ENCODE measurements at regions of chr20 and their contacts with region 1.

Region 1: DNA sequence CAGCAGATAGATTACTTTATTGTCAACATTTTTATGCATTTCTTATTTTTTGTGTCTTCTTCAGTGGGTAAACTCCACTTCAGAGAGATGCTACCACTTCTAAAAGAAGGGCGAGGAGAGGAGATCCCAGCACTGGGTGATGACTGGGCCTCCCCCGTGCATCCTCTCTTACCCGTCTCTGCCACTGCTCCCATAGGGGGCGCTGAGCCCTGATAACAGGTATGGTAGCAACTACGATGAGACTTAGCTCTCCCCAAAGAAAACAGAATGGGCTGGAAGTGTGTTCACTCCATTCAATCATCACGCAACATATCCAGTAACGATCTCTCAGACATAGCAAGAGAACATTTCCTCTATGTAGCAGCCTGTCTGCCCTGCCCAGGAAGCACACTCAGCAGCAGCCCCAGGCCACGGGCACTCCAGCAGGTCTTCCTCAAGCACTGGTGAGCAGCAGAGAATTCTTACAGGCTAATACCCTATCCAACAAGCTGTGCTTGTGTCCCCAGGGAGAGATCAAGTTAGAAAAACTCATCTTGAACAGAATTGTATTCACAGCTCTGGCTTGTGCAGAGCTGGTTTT is 533.2 kb upstream of the CDH4 start:
- DNase-seq: peak; percentile 23
- H3K4me3 ChIP-seq: no peak overlapping the region
- H3K27ac ChIP-seq: no peak overlapping the region
- H3K4me1 ChIP-seq: no peaks in the 10 kb centered on the region
- H3K27me3 ChIP-seq: peaks cover 13% of the 10 kb centered on the region
- CTCF ChIP-seq: peak; percentile 51

Region 2: DNA sequence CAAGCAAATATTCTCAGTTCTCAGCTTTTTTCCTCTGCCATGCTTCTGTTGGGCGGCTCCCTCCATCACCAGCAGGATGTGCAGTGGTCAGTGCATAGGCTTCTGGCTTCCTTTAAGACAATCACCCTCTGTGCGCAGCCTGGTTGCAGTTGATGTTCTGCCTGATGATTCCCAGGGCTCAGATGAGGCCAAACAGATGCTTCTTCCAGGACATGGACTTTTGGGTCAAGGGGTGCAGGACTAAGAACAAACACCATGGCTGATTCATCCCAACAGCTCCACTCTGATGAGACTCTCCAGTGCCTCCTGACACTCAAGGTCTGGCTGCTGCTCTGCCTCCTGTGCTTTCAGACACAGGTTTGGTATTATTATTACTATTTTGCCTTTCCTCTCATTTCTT is 21.6 kb before region 1 on chr20:
- CTCF ChIA-PET with region 1: no interaction called
- POLR2A ChIA-PET with region 1: no interaction called
- intact Hi-C with region 1: no loop called
- DNase-seq: no peak
- H3K4me3 ChIP-seq: no peak overlapping the region
- H3K27ac ChIP-seq: no peak overlapping the region
- H3K4me1 ChIP-seq: no peaks in the 10 kb centered on the region
- H3K27me3 ChIP-seq: no peaks in the 10 kb centered on the region
- CTCF ChIP-seq: no peak

Region 3: DNA sequence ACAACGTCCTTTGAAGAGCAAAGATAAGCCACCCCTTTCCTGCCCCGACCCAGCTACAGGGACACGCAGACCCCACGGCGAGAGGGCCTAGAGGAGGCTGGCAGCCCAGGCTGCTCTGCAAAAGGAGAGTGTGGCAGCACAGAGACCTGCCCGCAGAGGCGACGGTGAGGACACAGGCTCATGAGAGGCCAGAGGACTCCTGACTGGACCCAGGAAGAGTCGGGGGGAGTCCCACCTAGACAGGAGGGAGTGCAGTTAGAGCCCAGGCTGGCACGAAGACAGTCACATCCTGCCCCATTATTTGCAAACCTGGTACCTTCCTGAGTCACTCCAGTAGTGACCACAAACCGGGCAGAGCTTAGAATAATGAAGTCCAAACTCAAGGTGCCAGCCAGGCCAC is 305.6 kb after region 1 on chr20:
- CTCF ChIA-PET with region 1: interaction called, 13 read pairs
- POLR2A ChIA-PET with region 1: no interaction called
- intact Hi-C with region 1: no loop called
- DNase-seq: no peak
- H3K4me3 ChIP-seq: no peak overlapping the region
- H3K27ac ChIP-seq: no peak overlapping the region
- H3K4me1 ChIP-seq: no peaks in the 10 kb centered on the region
- H3K27me3 ChIP-seq: peaks cover 11% of the 10 kb centered on the region
- CTCF ChIP-seq: no peak